ENCODE measurements at regions of chr3 and their contacts with region 1.

Region 1: GRCh38 chr3:42101048-42101447 is 9.9 kb downstream of the TRAK1 start:
- DNase-seq: peak; percentile 28
- H3K4me3 ChIP-seq: no peak overlapping the region
- H3K27ac ChIP-seq: no peak overlapping the region
- H3K4me1 ChIP-seq: peaks cover 39% of the 10 kb centered on the region
- H3K27me3 ChIP-seq: no peaks in the 10 kb centered on the region
- CTCF ChIP-seq: no peak
- POLR2A ChIP-seq: no peak

Region 2: DNA sequence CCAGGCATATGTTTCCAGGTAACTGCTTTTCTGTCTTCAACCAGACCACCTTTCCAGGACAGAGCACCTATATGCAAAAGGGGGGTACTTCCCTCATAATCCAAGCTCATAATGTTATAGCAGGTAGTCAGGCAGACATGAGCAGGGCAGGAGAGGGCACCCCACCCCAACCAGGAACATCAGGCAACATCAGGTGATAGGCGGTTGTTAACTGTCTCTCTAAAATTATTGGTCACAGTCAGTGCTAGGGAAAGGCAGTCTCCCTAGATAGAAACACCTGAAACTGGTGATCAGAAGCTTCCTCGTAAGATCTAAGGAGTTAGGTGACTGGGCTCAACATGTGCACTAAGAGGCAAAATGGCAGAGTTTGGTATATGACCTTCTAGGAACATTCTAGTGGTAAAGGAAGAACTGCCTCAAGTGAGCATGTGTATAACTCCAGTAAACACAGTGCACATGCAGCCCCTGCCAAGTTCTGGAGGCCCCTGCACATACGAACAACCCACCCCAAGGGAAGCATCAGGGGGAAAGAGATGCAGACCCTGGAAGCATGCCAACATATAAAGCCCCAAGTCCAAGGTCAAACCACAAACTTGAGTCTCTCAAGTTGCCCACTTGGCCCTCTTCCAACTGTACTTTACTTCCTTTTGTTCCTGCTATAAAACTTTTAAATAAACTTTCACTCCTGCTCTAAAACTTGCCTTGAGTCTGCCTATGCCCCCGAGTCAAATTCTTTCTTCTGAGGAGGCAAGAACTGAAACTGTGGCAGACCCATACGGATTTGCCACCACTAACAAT is 410.1 kb before region 1 on chr3:
- CTCF ChIA-PET with region 1: no interaction called
- POLR2A ChIA-PET with region 1: no interaction called
- dilution Hi-C with region 1: no loop called
- intact Hi-C with region 1: loop called (anchors 1 kb)
- DNase-seq: peak; percentile 80
- H3K4me3 ChIP-seq: no peak overlapping the region
- H3K27ac ChIP-seq: no peak overlapping the region
- H3K4me1 ChIP-seq: no peaks in the 10 kb centered on the region
- H3K27me3 ChIP-seq: no peaks in the 10 kb centered on the region
- CTCF ChIP-seq: no peak
- POLR2A ChIP-seq: no peak

Region 3: DNA sequence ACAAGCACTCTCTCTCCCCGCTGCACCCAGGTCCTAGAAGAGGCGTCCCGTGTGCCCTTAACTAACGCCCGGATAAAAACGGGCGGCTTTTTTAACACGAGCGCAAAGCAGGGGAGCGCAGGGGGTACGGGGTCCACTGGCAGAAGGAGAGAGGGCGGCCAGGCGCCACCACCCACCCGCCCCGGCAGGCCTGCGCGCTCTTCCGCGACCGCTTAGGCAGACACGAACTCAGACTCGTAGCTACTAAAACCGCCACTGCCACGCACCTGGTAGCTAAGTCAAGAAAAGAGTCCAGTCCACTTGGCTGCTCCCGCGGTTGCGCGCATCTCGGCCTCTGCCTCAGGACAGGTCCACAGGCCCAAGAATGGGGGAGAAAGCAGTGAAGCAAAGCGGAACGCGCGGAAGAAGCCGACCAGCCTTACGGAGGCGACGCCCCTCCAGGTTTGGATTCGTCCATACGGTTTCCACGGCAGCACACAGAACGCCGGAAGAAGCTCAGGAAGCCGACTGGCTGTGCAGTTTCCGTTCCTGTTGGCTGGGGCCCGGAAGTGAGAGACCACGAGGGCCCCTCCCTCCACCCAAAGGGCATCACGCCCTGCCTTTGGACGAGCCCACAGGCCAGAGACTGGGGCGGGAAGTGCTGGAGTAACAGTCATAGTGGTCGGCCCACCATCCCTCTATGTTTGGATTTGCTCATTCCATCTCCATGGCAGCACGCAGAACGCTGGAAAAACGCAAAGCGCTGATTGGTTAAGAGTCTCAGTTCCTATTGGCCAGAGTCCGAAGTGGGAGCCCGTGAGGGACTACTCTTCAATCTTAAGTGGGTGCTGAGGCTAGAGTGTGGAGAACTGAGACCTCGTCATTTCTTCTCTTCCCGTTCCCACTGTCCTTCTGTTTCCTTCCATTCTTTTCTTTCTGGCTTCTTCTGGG is 139.0 kb before region 1 on chr3 and contains the start of gene ULK4:
- CTCF ChIA-PET with region 1: interaction called, 12 read pairs
- POLR2A ChIA-PET with region 1: interaction called, 3 read pairs
- dilution Hi-C with region 1: no loop called
- intact Hi-C with region 1: loop called (anchors 1 kb)
- DNase-seq: peak; percentile 100
- H3K4me3 ChIP-seq: peak within 1 kb of the TSS; percentile 29 to 72 (median 64)
- H3K27ac ChIP-seq: peak within 1 kb of the TSS; percentile 90
- H3K4me1 ChIP-seq: peaks cover 13% of the 10 kb centered on the region
- H3K27me3 ChIP-seq: no peaks in the 10 kb centered on the region
- CTCF ChIP-seq: no peak
- POLR2A ChIP-seq: peak; percentile 63
- total RNA-seq, gene ULK4: 13.1 and 16.0 TPM in 2 replicates

Region 4: GRCh38 chr3:42025370-42026138 is 75.5 kb before region 1 on chr3:
- CTCF ChIA-PET with region 1: interaction called, 23 read pairs
- POLR2A ChIA-PET with region 1: no interaction called
- dilution Hi-C with region 1: no loop called
- intact Hi-C with region 1: no loop called
- DNase-seq: peak; percentile 98
- H3K4me3 ChIP-seq: peak overlapping the region in 1 of 3 experiments; percentile 46
- H3K27ac ChIP-seq: peak overlapping the region; percentile 93
- H3K4me1 ChIP-seq: peaks cover 40% of the 10 kb centered on the region
- H3K27me3 ChIP-seq: no peaks in the 10 kb centered on the region
- CTCF ChIP-seq: no peak
- POLR2A ChIP-seq: peak; percentile 18

Region 5: GRCh38 chr3:42052484-42053351 is 48.3 kb before region 1 on chr3:
- CTCF ChIA-PET with region 1: interaction called, 13 read pairs
- POLR2A ChIA-PET with region 1: interaction called, 7 read pairs
- dilution Hi-C with region 1: no loop called
- intact Hi-C with region 1: no loop called
- DNase-seq: peak; percentile 97
- H3K4me3 ChIP-seq: peak overlapping the region in 1 of 3 experiments; percentile 9
- H3K27ac ChIP-seq: peak overlapping the region; percentile 93
- H3K4me1 ChIP-seq: peaks cover 23% of the 10 kb centered on the region
- H3K27me3 ChIP-seq: no peaks in the 10 kb centered on the region
- CTCF ChIP-seq: no peak
- POLR2A ChIP-seq: no peak

Region 6: DNA sequence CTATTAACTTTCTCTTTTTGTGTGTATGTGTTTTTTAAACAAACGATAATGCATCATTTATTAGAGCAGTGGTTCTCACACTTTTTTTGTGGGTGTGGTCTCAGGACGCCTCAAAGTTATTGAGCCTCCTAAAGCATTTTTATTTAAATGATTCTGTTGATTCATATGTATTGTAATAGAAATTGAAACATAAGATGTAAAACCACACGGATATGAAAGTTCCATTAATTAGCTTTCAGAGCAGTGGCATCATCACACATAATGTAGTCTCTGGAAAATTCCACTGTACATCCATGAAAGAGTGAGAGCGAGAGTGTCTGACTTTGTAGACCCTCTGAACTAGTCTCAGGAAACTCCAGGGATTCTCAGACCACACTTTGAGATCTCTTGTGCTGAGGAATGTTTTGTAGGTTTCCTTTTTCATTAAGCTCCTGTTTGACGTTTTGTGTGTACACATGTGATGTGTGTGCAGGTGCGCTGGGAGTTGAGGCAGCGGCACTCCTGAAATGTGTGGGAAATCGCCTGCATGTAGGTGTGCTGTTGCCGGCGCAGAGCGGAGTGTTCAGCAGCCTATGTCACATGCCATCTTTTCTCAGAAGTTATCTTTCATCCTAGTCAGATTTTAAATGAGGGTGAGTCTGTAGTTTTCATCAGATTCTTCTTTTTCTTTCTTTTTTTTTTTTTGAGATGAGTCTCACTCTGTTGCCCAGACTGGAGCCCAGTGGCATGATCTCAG is 15.2 kb before region 1 on chr3:
- CTCF ChIA-PET with region 1: interaction called, 14 read pairs
- POLR2A ChIA-PET with region 1: no interaction called
- dilution Hi-C with region 1: no loop called
- intact Hi-C with region 1: no loop called
- DNase-seq: no peak
- H3K4me3 ChIP-seq: no peak overlapping the region
- H3K27ac ChIP-seq: no peak overlapping the region
- H3K4me1 ChIP-seq: peaks cover 3% of the 10 kb centered on the region
- H3K27me3 ChIP-seq: no peaks in the 10 kb centered on the region
- CTCF ChIP-seq: no peak
- POLR2A ChIP-seq: no peak

Region 7: GRCh38 chr3:42229942-42230688 is 129.1 kb after region 1 on chr3:
- CTCF ChIA-PET with region 1: interaction called, 13 read pairs
- POLR2A ChIA-PET with region 1: no interaction called
- dilution Hi-C with region 1: no loop called
- intact Hi-C with region 1: no loop called
- DNase-seq: peak; percentile 46
- H3K4me3 ChIP-seq: no peak overlapping the region
- H3K27ac ChIP-seq: no peak overlapping the region
- H3K4me1 ChIP-seq: no peaks in the 10 kb centered on the region
- H3K27me3 ChIP-seq: peaks cover 4 to 7% of the 10 kb centered on the region in 2 experiments
- CTCF ChIP-seq: peak; percentile 43 to 45
- POLR2A ChIP-seq: no peak

Region 8: GRCh38 chr3:42425736-42426407 is 324.8 kb after region 1 on chr3:
- CTCF ChIA-PET with region 1: no interaction called
- POLR2A ChIA-PET with region 1: no interaction called
- dilution Hi-C with region 1: no loop called
- intact Hi-C with region 1: no loop called
- DNase-seq: no peak
- H3K4me3 ChIP-seq: no peak overlapping the region
- H3K27ac ChIP-seq: no peak overlapping the region
- H3K4me1 ChIP-seq: no peaks in the 10 kb centered on the region
- H3K27me3 ChIP-seq: no peaks in the 10 kb centered on the region
- CTCF ChIP-seq: no peak
- POLR2A ChIP-seq: no peak